WTC11 (cell line): ENCODE measurements at regions of chr3 and their contacts with region 1.

Region 1: GRCh38 chr3:13657660-13658435 is 108.9 kb downstream of the FBLN2 start:
- DNase-seq: peak; percentile 76
- ATAC-seq: peak; percentile 67
- H3K4me3 Mint-ChIP-seq: peak overlapping the region; percentile 42; the same call in 1 of the 2 replicates
- H3K27ac Mint-ChIP-seq: no peak overlapping the region
- H3K4me1 Mint-ChIP-seq: peaks cover 10% of the 10 kb centered on the region
- H3K27me3 Mint-ChIP-seq: peaks cover 43% of the 10 kb centered on the region
- CTCF ChIP-seq: peak; percentile 73

Region 2: GRCh38 chr3:13479581-13480339 is 178.1 kb before region 1 on chr3 and contains the start of gene HDAC11:
- CTCF ChIA-PET with region 1: interaction called, 18 read pairs
- POLR2A ChIA-PET with region 1: no interaction called
- DNase-seq: peak; percentile 99
- ATAC-seq: peak; percentile 93
- H3K4me3 Mint-ChIP-seq: peak within 1 kb of the TSS; percentile 85
- H3K27ac Mint-ChIP-seq: peak within 1 kb of the TSS; percentile 91
- H3K4me1 Mint-ChIP-seq: peaks cover 33% of the 10 kb centered on the region
- H3K27me3 Mint-ChIP-seq: peaks cover 28% of the 10 kb centered on the region
- CTCF ChIP-seq: no peak
- total RNA-seq, gene HDAC11: 11.5 to 12.5 TPM (median 12.0 TPM) in 3 replicates

Region 3: DNA sequence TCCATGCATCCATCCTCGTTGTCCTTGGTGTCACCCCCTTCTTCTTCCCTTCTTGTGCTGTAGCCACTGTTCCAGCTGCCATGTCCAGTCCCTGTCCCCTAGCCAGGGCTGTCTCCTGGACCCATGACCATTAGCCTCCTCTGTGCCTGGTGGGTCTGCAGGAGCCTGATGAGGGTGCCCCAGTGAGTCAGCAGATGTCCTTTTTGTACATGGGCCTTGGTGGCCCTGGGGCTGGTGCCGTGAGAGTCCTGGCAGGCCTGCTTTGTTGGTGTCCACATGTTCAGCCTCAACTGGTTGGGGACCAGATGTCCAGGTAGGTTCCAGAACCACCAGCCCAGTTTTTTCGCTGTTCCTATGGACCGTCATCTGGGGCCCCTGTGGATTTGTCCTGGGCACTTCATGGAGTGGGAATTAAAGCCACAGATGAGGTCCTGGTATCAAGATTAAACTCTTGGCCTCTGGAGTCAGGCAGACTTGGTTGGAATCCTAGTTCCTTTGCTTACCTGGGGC is 42.8 kb before region 1 on chr3:
- CTCF ChIA-PET with region 1: no interaction called
- POLR2A ChIA-PET with region 1: no interaction called
- DNase-seq: no peak
- ATAC-seq: no peak
- H3K4me3 Mint-ChIP-seq: no peak overlapping the region
- H3K27ac Mint-ChIP-seq: no peak overlapping the region
- H3K4me1 Mint-ChIP-seq: no peaks in the 10 kb centered on the region; the same call in 1 of the 2 replicates
- H3K27me3 Mint-ChIP-seq: no peaks in the 10 kb centered on the region; the same call in 1 of the 2 replicates
- CTCF ChIP-seq: no peak

Region 4: DNA sequence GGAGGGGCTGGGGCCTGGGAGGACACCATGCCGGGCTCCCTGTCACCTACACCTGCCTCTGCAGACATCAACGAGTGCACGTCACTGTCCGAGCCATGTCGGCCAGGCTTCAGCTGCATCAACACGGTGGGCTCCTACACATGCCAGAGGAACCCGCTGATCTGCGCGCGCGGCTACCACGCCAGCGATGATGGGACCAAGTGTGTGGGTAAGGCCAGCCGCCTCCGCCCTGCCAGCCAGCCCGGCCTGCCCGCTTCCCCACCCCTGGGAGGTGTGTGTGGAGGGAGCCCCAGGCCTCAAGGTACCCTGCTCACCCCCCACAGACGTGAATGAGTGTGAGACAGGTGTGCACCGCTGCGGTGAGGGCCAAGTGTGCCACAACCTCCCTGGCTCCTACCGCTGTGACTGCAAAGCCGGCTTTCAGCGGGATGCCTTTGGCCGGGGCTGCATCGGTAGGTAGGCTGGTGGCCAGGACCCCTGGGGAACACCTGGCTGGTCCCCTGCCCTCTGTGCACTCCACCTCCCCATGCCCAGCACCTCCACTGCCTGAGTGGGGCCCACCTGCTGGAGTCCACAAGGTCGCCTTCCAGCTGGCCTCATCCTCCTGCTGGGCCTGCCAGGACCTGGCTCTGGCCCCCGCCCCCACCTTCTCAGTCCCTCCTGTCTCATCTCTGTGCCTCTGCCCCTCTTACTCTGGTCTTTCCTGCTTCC is 28.9 kb before region 1 on chr3:
- CTCF ChIA-PET with region 1: no interaction called
- POLR2A ChIA-PET with region 1: no interaction called
- DNase-seq: no peak
- ATAC-seq: no peak
- H3K4me3 Mint-ChIP-seq: no peak overlapping the region
- H3K27ac Mint-ChIP-seq: peak overlapping the region; percentile 72; the same call in 1 of the 2 replicates
- H3K4me1 Mint-ChIP-seq: no peaks in the 10 kb centered on the region
- H3K27me3 Mint-ChIP-seq: no peaks in the 10 kb centered on the region
- CTCF ChIP-seq: no peak

Region 5: GRCh38 chr3:13687517-13687943 is 29.7 kb after region 1 on chr3:
- CTCF ChIA-PET with region 1: interaction called, 21 read pairs
- POLR2A ChIA-PET with region 1: no interaction called
- DNase-seq: no peak
- ATAC-seq: peak; percentile 21; the same call in 1 of the 2 replicates
- H3K4me3 Mint-ChIP-seq: no peak overlapping the region
- H3K27ac Mint-ChIP-seq: no peak overlapping the region
- H3K4me1 Mint-ChIP-seq: peaks cover 12% of the 10 kb centered on the region
- H3K27me3 Mint-ChIP-seq: no peaks in the 10 kb centered on the region; the same call in 1 of the 2 replicates
- CTCF ChIP-seq: no peak

Region 6: DNA sequence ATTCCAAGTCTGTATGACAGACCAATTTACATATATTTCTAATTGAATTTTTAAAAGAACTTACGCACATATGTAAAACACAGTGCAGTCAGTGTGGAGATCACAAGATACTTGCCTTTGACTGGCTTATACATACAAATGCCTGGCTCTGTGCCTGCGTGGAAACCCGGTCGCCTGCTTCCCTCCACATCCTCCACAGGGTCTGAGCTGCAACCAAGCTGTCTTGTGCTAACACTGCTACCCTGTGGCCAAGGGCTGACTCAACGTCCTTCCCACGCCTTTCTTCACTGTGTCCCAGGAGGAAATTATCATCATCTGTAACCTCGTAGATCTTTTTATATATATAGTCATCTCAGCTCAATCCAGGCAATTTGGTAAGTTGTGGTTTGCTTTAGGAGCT is 105.1 kb after region 1 on chr3:
- CTCF ChIA-PET with region 1: interaction called, 18 read pairs
- POLR2A ChIA-PET with region 1: no interaction called
- DNase-seq: no peak
- ATAC-seq: peak; percentile 69
- H3K4me3 Mint-ChIP-seq: no peak overlapping the region
- H3K27ac Mint-ChIP-seq: no peak overlapping the region
- H3K4me1 Mint-ChIP-seq: no peaks in the 10 kb centered on the region
- H3K27me3 Mint-ChIP-seq: peaks cover 4% of the 10 kb centered on the region
- CTCF ChIP-seq: no peak

Region 7: DNA sequence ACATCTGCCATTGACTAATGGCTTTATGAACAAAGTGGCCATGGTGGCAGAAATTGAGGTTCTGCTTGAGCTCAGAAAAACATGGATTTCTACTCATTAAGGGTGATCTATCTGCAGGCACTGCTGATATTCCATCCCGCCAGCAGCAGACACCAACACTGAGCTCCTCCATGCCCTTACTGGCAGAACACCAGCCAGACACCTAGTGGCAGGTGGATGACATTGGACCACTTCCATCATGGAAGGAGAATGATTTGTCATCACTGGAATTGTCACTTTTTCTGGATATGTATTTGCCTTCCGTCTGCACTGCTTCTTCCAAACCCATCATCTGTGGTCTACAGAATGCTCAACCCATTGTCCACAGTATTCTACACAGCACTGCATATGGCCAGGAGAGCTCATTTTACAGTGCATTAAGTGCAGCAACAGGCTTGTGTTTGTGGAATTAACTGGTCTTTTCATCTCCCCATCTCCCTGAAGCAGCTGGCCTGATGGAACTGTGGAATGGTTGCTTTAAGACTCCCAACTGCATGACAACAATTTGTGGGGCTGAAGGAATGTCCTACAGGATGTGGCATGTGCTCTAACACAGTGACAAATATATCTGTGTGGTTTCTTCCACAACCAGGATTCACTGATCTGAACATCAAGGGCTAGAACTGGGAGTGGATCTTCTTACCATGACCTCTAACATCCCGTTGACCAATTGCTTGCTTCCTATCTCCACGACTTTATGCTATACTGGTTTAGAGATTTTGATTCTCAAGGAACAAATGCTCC is 118.6 kb after region 1 on chr3:
- CTCF ChIA-PET with region 1: interaction called, 15 read pairs
- POLR2A ChIA-PET with region 1: no interaction called
- DNase-seq: no peak
- ATAC-seq: 0 out of 2 replicates have a peak, but pooled peaks have one; percentile 53
- H3K4me3 Mint-ChIP-seq: no peak overlapping the region
- H3K27ac Mint-ChIP-seq: no peak overlapping the region
- H3K4me1 Mint-ChIP-seq: 0 out of 2 replicates have a peak, but pooled peaks cover under 1% of the 10 kb centered on the region
- H3K27me3 Mint-ChIP-seq: no peaks in the 10 kb centered on the region; the same call in none of the 2 replicates
- CTCF ChIP-seq: no peak

Region 8: DNA sequence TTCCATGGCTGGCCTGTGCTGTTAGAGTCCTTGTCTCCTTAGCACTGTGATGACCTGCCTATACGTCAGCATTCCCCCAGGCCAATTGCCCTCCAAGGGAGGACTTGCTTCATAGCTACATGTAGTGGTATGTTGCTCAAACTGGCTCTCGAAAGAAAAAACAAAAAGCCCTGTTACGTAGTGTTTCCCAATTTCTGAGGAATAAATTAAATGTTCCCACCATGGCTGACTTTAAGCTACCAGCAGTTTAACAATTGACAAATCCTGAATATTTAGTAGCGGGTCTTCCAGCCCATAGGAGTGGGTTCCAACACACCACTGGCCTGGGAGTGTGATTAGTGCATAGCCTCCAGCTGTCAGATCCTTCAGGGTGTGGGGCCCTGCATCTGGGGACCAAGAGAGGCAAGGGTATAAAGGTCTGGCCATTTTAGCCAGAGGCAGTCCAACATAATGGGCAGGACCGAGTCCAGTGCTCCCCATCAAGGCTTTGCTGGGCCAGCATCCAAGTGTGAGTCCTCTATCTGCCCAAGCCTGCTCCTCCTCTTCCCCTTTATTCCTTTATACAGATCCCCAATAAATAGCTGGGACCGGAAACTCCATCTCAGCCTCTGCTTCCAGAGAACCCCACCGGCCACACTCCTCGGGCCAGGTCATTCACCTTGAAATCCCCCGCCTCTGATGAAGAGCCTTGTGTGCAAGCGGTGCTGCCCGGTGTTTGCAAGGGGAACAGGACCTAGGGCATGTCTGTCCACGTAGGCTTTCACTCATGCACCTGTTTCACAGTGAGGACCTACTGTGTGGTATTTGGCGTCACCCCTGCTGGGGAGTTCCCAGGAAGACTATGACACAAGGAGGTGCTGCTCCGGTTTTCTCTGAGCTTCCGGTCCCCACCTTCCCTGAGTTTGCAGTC is 167.7 kb after region 1 on chr3:
- CTCF ChIA-PET with region 1: interaction called, 17 read pairs
- POLR2A ChIA-PET with region 1: no interaction called
- DNase-seq: no peak
- ATAC-seq: no peak
- H3K4me3 Mint-ChIP-seq: no peak overlapping the region
- H3K27ac Mint-ChIP-seq: no peak overlapping the region
- H3K4me1 Mint-ChIP-seq: 0 out of 2 replicates have a peak, but pooled peaks cover 6% of the 10 kb centered on the region
- H3K27me3 Mint-ChIP-seq: peaks cover 3% of the 10 kb centered on the region; the same call in 1 of the 2 replicates
- CTCF ChIP-seq: no peak

Region 9: DNA sequence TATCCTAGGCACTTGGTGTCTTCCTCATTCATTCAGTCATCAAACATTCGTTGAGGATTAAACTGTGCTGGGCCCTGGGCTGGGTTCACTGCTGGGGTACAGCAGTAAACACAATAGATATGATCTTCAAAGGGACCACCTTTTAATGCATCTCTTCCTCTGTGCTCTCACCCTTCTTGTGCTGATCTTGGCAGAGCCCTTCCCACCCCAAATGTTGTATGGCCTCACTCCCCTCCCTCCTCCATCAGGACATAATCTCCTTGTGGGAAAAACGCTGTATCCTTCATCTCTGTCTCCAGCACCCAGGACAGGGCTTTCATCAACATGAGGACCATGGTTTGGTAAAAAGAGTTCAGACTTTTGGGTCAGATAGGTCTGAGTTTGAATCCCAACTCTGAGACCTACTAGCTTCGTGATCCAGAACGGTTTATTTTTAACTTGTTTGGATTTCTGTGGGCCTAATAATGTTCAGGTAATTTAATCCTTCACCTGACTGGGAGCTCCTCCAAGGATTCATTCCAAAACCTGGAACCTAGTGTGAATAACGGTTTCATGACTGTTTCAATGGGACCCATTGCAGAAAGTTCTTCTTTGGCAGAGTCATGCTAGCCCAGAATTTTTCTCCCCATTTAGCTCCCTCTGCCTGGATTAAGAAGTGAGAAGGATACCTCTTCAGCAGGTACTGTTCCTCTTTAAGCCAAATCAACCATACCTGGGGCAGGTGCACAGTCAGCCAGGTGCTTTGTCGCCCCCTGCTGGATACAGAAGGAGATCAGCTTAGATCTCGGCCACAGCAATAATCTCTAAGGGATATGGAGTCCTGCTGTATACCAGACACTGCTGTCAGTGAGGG is 227.2 kb after region 1 on chr3:
- CTCF ChIA-PET with region 1: interaction called, 103 read pairs
- POLR2A ChIA-PET with region 1: no interaction called
- DNase-seq: peak; percentile 77
- ATAC-seq: peak; percentile 84
- H3K4me3 Mint-ChIP-seq: no peak overlapping the region
- H3K27ac Mint-ChIP-seq: no peak overlapping the region
- H3K4me1 Mint-ChIP-seq: no peaks in the 10 kb centered on the region
- H3K27me3 Mint-ChIP-seq: peaks cover 82% of the 10 kb centered on the region
- CTCF ChIP-seq: peak; percentile 88